PC-3 (cell line): ENCODE measurements at regions of chr21 and their contacts with region 1.

Region 1: DNA sequence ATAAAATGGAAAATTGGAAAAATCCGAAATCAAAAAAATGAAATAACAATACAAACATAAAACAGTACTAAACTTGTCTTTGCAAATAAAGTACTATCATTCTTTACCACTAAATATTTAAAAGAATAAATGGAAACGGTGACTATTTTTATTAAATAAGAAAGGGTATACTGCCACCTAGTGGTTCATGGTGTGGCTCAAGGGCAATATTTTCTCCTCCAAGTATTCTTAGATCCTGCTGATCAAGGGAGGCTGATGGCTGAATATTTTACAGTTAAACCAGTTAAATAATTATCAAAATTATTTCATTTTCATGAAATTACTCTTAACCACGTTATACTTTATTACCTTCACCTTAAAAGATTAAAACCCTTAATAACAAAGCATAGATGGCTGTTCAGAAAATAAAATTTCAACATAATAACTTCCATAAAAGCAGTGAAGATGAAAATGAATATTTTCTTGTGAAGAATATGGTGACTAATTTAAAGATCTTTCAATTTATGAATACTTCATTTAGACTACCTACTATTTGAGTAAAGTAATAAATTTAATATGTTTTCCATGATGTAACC is 1793.9 kb downstream of the NCAM2 start:
- DNase-seq: peak; percentile 77
- ATAC-seq: peak; percentile 37; the same call in 1 of the 2 replicates
- H3K4me3 ChIP-seq: no peak overlapping the region
- H3K27ac ChIP-seq: no peak overlapping the region
- H3K4me1 ChIP-seq: no peaks in the 10 kb centered on the region
- H3K27me3 ChIP-seq: no peaks in the 10 kb centered on the region
- CTCF ChIP-seq: peak; percentile 84

Region 2: GRCh38 chr21:21232320-21232719 is 1559.8 kb before region 1 on chr21:
- CTCF ChIA-PET with region 1: no interaction called
- POLR2A ChIA-PET with region 1: no interaction called
- intact Hi-C with region 1: loop called (anchors 2 kb)
- DNase-seq: peak; percentile 17
- ATAC-seq: no peak
- H3K4me3 ChIP-seq: no peak overlapping the region
- H3K27ac ChIP-seq: no peak overlapping the region
- H3K4me1 ChIP-seq: no peaks in the 10 kb centered on the region
- H3K27me3 ChIP-seq: no peaks in the 10 kb centered on the region
- CTCF ChIP-seq: peak; percentile 58

Region 3: DNA sequence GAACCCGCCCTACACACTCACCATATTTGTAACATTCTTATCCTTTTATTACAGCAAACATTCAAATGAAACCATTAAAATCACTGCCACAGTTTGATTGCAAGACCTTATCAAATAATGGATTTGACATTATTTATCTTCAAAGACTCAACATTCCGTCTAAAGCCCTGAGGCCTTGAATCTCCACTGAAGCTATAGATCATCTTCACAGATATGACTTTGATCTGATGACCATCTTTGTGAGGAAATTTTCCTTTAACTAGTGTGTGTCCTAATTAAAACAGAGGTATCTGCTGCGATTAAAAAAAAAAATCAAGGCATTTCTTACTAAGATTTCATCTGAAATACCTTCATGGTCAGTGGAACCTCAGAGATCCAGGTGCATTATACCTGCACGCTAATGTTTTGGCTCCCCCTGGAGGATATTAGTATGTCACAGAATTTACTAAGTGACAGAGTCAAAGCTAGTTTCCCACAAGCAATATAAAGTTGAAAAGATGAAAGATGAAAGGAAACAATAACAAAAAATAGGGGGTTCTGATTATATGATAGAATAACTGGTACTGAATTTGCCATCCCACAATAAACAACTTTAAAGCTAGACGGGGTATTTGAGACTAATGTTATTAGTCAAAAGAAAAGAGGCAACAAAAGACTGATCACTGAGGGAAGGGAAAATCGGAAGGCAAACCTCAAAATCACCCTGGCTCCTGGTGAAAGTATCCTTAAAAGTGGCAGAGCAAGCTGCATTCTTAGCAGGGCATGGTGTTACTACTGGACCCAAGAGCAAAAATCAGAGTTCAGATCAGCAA is 870.4 kb before region 1 on chr21:
- CTCF ChIA-PET with region 1: interaction called, 3 read pairs
- POLR2A ChIA-PET with region 1: no interaction called
- intact Hi-C with region 1: loop called (anchors 5 kb)
- DNase-seq: peak; percentile 65
- ATAC-seq: peak; percentile 64
- H3K4me3 ChIP-seq: peak overlapping the region; percentile 33
- H3K27ac ChIP-seq: no peak overlapping the region
- H3K4me1 ChIP-seq: no peaks in the 10 kb centered on the region
- H3K27me3 ChIP-seq: no peaks in the 10 kb centered on the region
- CTCF ChIP-seq: peak; percentile 88

Region 4: GRCh38 chr21:22728091-22728490 is 64.0 kb before region 1 on chr21:
- CTCF ChIA-PET with region 1: no interaction called
- POLR2A ChIA-PET with region 1: no interaction called
- intact Hi-C with region 1: no loop called
- DNase-seq: peak; percentile 3
- ATAC-seq: no peak
- H3K4me3 ChIP-seq: no peak overlapping the region
- H3K27ac ChIP-seq: no peak overlapping the region
- H3K4me1 ChIP-seq: no peaks in the 10 kb centered on the region
- H3K27me3 ChIP-seq: no peaks in the 10 kb centered on the region
- CTCF ChIP-seq: no peak

Region 5: DNA sequence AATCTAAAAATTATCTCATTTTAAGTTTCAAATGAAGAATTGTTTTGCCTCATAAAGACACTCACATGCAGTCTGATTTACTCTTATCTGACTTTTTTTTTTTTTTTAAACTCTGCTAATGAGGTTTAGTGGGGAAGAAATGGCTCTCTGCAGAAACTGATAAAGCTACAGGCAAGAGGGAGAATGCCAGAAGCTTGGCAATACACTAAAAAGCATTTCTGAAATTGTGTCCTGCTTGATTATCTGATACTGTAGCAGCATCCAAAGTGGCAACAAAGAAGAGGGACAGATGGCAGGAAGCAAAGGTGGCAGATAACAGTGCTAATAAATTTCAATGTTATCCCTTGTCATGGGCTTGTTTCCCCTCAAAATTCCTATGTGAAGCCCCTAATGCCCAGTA is 49.0 kb before region 1 on chr21:
- CTCF ChIA-PET with region 1: no interaction called
- POLR2A ChIA-PET with region 1: no interaction called
- intact Hi-C with region 1: no loop called
- DNase-seq: no peak
- ATAC-seq: no peak
- H3K4me3 ChIP-seq: no peak overlapping the region
- H3K27ac ChIP-seq: no peak overlapping the region
- H3K4me1 ChIP-seq: no peaks in the 10 kb centered on the region
- H3K27me3 ChIP-seq: no peaks in the 10 kb centered on the region
- CTCF ChIP-seq: no peak

Region 6: GRCh38 chr21:23016405-23017016 is 224.4 kb after region 1 on chr21:
- CTCF ChIA-PET with region 1: no interaction called
- POLR2A ChIA-PET with region 1: no interaction called
- intact Hi-C with region 1: loop called (anchors 2 kb)
- DNase-seq: peak; percentile 62
- ATAC-seq: peak; percentile 69
- H3K4me3 ChIP-seq: no peak overlapping the region
- H3K27ac ChIP-seq: peak overlapping the region; percentile 89
- H3K4me1 ChIP-seq: peaks cover 21% of the 10 kb centered on the region
- H3K27me3 ChIP-seq: no peaks in the 10 kb centered on the region
- CTCF ChIP-seq: peak; percentile 79

Region 7: GRCh38 chr21:23083242-23083641 is 291.2 kb after region 1 on chr21:
- CTCF ChIA-PET with region 1: no interaction called
- POLR2A ChIA-PET with region 1: no interaction called
- intact Hi-C with region 1: no loop called
- DNase-seq: no peak
- ATAC-seq: no peak
- H3K4me3 ChIP-seq: no peak overlapping the region
- H3K27ac ChIP-seq: no peak overlapping the region
- H3K4me1 ChIP-seq: no peaks in the 10 kb centered on the region
- H3K27me3 ChIP-seq: no peaks in the 10 kb centered on the region
- CTCF ChIP-seq: no peak

Region 8: DNA sequence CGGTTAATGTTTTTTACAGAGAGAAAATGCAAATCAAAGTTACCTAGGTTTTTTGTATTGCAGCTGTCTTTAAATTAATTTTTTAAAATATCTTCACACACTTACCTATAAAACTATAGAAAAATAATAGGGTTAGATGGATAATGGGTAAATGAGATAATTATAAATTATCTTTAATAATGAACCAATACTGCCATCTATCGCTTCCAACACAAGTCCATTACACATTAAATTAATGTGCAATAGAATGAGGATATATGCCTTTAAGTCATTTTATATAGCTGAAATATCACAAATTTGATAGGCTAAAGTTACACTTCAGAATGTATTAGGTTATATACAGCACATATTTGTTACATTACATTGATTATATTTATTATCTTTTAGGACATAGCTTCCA is 602.4 kb after region 1 on chr21:
- CTCF ChIA-PET with region 1: no interaction called
- POLR2A ChIA-PET with region 1: no interaction called
- intact Hi-C with region 1: loop called (anchors 2 kb)
- DNase-seq: peak; percentile 25
- ATAC-seq: peak; percentile 40
- H3K4me3 ChIP-seq: no peak overlapping the region
- H3K27ac ChIP-seq: no peak overlapping the region
- H3K4me1 ChIP-seq: no peaks in the 10 kb centered on the region
- H3K27me3 ChIP-seq: no peaks in the 10 kb centered on the region
- CTCF ChIP-seq: peak; percentile 61